Left colon (tissue), 2 donors: ENCODE measurements at regions of chr18 and their contacts with region 1.

Region 1: DNA sequence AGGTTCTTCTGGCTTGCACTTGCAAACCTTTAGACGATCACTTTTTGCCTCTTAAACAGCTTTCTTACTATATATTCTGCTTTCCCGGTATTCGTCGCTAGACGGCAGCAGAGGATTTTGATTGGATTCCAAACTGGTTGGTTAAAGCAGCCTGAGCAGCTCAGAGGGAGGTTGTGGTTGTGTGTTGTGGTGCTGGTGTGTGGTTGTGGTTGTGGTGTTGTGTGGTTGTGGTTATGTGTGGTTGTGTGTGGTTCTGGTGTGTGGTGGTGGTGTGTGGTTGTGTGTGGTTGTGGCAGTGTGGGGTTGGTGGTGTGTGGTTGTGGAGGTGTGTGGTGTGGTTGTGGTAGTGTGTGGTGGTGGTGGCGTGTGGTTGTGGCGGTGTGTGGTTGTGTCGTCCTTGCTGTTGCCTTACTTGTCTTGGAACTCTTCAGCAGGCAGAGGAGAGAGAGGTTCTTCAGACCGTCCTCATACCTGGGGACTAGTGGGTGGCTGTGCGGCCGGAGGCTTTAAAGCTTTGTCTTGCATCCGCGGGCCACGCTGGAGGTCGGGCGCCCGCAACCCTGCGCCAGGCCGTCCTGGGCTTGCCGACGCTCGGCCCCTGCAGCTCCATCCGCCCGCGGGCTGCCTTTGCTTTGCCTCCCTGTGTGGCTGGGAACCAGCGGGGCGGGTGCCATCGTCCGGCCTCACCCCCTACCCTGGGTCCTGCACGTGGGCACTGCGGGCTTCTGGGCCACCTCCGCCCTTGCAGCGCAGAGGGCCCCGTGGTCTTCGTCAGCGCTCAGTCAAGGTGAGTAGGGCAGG is 190.8 kb downstream of the ARHGAP28 start:
- DNase-seq: peak; percentile 42 to 77
- ATAC-seq: peak; percentile 84

Region 2: DNA sequence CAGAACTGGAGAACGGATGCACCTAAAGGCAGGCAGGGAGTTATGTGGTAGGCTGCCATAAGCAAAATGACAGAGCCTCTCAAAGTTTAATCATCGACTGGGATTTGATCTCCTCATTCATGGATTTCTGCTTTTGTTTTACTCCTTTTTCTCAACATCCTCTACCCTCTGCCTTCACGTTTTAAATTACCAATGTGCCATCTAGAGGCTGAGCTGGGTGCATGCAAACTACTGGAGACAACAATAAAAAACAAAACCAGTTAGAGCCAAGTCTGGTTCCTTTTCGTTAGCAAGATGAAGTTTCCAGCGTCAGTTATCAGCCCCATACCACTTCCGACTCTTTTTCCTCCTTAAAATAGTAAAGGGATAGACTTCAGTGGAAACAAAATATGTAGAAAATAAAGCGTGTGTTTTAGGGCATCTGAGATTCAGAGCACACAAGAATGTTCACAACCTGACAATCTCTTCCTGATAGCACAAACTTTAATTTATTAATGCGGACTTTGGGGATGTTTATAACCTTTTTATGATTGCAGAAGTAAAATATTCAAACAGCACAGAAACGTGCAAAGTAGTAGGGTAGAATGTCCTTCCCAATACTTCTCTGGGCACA is 80.3 kb after region 1 on chr18:
- intact Hi-C with region 1: loop called in 1 of 2 experiments (anchors 10 kb)
- DNase-seq: no peak
- ATAC-seq: peak; percentile 90

Region 3: DNA sequence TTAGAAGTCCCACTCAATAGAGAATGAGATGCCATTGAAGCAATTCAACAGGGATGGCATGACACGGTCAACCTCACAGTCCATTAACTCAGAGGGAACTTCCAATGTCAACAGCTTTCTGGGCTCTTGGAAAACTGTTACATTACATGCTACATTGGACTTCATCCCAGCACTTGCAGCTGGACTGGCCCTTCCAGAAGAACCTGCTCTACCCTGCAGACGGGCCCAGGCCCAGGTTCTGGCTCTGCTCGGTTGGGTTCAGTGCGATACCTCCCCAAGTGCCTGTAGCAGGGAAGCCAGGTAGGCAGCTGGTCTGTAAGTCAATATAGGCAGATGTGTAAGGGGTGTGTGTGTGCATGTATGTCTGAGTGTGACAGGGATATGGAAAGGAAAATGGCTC is 184.3 kb after region 1 on chr18:
- intact Hi-C with region 1: no loop called
- DNase-seq: no peak
- ATAC-seq: no peak

Region 4: GRCh38 chr18:7177116-7177744 is 256.9 kb after region 1 on chr18:
- intact Hi-C with region 1: loop called in 1 of 2 experiments (anchors 10 kb)
- DNase-seq: peak in 1 of 2 donors; percentile 14
- ATAC-seq: peak; percentile 58